Heart right ventricle (tissue), 16 donors: ENCODE measurements at regions of chr2 and their contacts with region 1.

Region 1: GRCh38 chr2:107308835-107309234 is 422.9 kb upstream of the ST6GAL2 start:
- DNase-seq: no peak
- ATAC-seq: no peak
- H3K4me3 ChIP-seq: no peak overlapping the region
- H3K27ac ChIP-seq: no peak overlapping the region
- H3K4me1 ChIP-seq: no peaks in the 10 kb centered on the region
- H3K27me3 ChIP-seq: peaks cover 0 to 5% (median 0%) of the 10 kb centered on the region in 7 donors
- CTCF ChIP-seq: no peak

Region 2: GRCh38 chr2:106085181-106085940 is 1223.5 kb before region 1 on chr2:
- intact Hi-C with region 1: no loop called
- DNase-seq: peak in 1 of 2 donors; percentile 61
- ATAC-seq: peak in 7 of 8 donors; percentile 31 to 89 (median 76)
- H3K4me3 ChIP-seq: no peak overlapping the region
- H3K27ac ChIP-seq: peak overlapping the region in 1 of 10 donors; percentile 16
- H3K4me1 ChIP-seq: peaks cover 0 to 5% (median 0%) of the 10 kb centered on the region in 9 donors
- H3K27me3 ChIP-seq: no peaks in the 10 kb centered on the region
- CTCF ChIP-seq: peak in 8 of 9 donors; percentile 26 to 71 (median 54)

Region 3: GRCh38 chr2:107258531-107259407 is 50.1 kb before region 1 on chr2:
- intact Hi-C with region 1: loop called in 1 of 10 experiments (anchors 5 kb)
- DNase-seq: no peak
- ATAC-seq: no peak
- H3K4me3 ChIP-seq: no peak overlapping the region
- H3K27ac ChIP-seq: no peak overlapping the region
- H3K4me1 ChIP-seq: no peaks in the 10 kb centered on the region
- H3K27me3 ChIP-seq: no peaks in the 10 kb centered on the region
- CTCF ChIP-seq: no peak

Region 4: DNA sequence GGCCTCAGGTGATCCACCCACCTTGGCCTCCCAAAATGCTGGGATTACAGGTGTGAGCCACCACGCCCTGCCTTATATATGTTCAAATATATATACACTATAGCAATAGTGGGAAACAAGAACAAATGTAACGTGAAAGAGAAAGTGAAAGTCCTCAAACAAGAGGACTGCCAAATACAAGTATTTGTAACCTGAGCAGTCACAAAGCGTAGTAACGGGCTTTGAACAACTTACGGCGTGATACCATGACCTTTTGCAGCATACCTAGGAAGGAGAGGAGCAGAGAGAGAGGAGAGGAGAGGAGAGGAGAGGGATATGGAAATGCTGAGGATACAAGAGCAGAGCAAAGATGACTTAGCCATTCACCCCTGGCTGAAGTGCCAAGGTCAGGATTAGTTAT is 404.0 kb after region 1 on chr2:
- intact Hi-C with region 1: no loop called
- DNase-seq: no peak
- ATAC-seq: no peak
- H3K4me3 ChIP-seq: peak overlapping the region in 1 of 10 donors; percentile 10
- H3K27ac ChIP-seq: no peak overlapping the region
- H3K4me1 ChIP-seq: no peaks in the 10 kb centered on the region
- H3K27me3 ChIP-seq: no peaks in the 10 kb centered on the region
- CTCF ChIP-seq: no peak